Calu3 (cell line): ENCODE measurements at regions of chr6 and their contacts with region 1.

Region 1: GRCh38 chr6:28218271-28219248 is 6.5 kb upstream of the ZSCAN9 start:
- DNase-seq: peak; percentile 74
- H3K4me3 Mint-ChIP-seq: peak overlapping the region; percentile 72
- H3K27ac Mint-ChIP-seq: peak overlapping the region; percentile 32
- H3K4me1 Mint-ChIP-seq: no peaks in the 10 kb centered on the region
- H3K27me3 Mint-ChIP-seq: no peaks in the 10 kb centered on the region
- CTCF ChIP-seq: no peak

Region 2: GRCh38 chr6:28011722-28012121 is 206.8 kb before region 1 on chr6:
- CTCF ChIA-PET with region 1: no interaction called
- intact Hi-C with region 1: loop called (anchors 10 kb)
- DNase-seq: no peak
- H3K4me3 Mint-ChIP-seq: no peak overlapping the region
- H3K27ac Mint-ChIP-seq: no peak overlapping the region
- H3K4me1 Mint-ChIP-seq: no peaks in the 10 kb centered on the region
- H3K27me3 Mint-ChIP-seq: no peaks in the 10 kb centered on the region
- CTCF ChIP-seq: no peak